MCF 10A (cell line): ENCODE measurements at regions of chr2 and their contacts with region 1.

Region 1: GRCh38 chr2:191677646-191678436 is at the start of gene NABP1:
- DNase-seq: peak; percentile 97
- H3K4me3 Mint-ChIP-seq: peak within 1 kb of the TSS; percentile 84
- H3K27ac Mint-ChIP-seq: peak within 1 kb of the TSS; percentile 92
- H3K4me1 Mint-ChIP-seq: peaks cover 22% of the 10 kb centered on the region
- H3K27me3 Mint-ChIP-seq: no peaks in the 10 kb centered on the region
- CTCF ChIP-seq: no peak
- total RNA-seq, gene NABP1: 81.8 and 96.3 TPM in 2 replicates

Region 2: DNA sequence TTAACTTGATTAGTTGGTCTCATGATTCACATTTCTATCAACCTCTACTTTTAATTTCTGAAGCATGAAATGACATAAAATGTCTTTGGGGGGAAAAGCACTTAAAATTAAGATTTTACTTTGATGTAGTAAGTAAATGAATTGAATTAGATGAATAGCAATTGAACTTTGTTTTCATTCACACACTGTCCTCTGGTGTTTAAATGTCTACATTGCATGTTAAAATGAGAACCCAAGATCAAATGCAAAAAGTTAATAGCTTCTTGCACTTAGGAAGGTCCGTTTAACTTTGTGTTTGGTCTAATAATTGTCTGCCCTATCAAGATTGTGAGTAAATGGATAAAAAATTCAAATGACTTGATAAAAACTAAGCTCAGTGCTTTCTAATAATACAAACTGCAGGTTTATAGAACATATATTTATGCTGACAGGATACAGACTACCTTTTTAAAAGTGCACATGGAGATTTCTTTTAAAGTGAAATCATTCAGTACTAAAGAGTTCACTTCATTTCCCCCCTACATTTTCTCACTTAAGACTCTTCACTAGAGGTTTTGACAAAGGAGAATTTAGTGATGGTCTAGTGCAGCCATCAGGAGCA is 156.1 kb before region 1 on chr2:
- CTCF ChIA-PET with region 1: no interaction called
- POLR2A ChIA-PET with region 1: no interaction called
- intact Hi-C with region 1: no loop called
- DNase-seq: peak; percentile 57
- H3K4me3 Mint-ChIP-seq: no peak overlapping the region
- H3K27ac Mint-ChIP-seq: no peak overlapping the region
- H3K4me1 Mint-ChIP-seq: no peaks in the 10 kb centered on the region
- H3K27me3 Mint-ChIP-seq: no peaks in the 10 kb centered on the region
- CTCF ChIP-seq: peak; percentile 51

Region 3: GRCh38 chr2:191566344-191566743 is 111.5 kb before region 1 on chr2:
- CTCF ChIA-PET with region 1: interaction called, 14 read pairs
- POLR2A ChIA-PET with region 1: interaction called, 17 read pairs
- intact Hi-C with region 1: no loop called
- DNase-seq: peak; percentile 80
- H3K4me3 Mint-ChIP-seq: no peak overlapping the region
- H3K27ac Mint-ChIP-seq: no peak overlapping the region
- H3K4me1 Mint-ChIP-seq: no peaks in the 10 kb centered on the region
- H3K27me3 Mint-ChIP-seq: no peaks in the 10 kb centered on the region
- CTCF ChIP-seq: peak; percentile 76

Region 4: GRCh38 chr2:191593622-191594416 is 84.0 kb before region 1 on chr2:
- CTCF ChIA-PET with region 1: no interaction called
- POLR2A ChIA-PET with region 1: interaction called, 10 read pairs
- intact Hi-C with region 1: loop called (anchors 1 kb)
- DNase-seq: peak; percentile 99
- H3K4me3 Mint-ChIP-seq: peak overlapping the region; percentile 14
- H3K27ac Mint-ChIP-seq: peak overlapping the region; percentile 92
- H3K4me1 Mint-ChIP-seq: peaks cover 6% of the 10 kb centered on the region
- H3K27me3 Mint-ChIP-seq: no peaks in the 10 kb centered on the region
- CTCF ChIP-seq: no peak

Region 5: GRCh38 chr2:191626497-191627151 is 51.2 kb before region 1 on chr2:
- CTCF ChIA-PET with region 1: no interaction called
- POLR2A ChIA-PET with region 1: interaction called, 39 read pairs
- intact Hi-C with region 1: no loop called
- DNase-seq: peak; percentile 64
- H3K4me3 Mint-ChIP-seq: no peak overlapping the region
- H3K27ac Mint-ChIP-seq: no peak overlapping the region
- H3K4me1 Mint-ChIP-seq: peaks cover 53% of the 10 kb centered on the region
- H3K27me3 Mint-ChIP-seq: no peaks in the 10 kb centered on the region
- CTCF ChIP-seq: no peak

Region 6: GRCh38 chr2:191646195-191646902 is 31.5 kb before region 1 on chr2:
- CTCF ChIA-PET with region 1: interaction called, 3 read pairs
- POLR2A ChIA-PET with region 1: interaction called, 48 read pairs
- intact Hi-C with region 1: no loop called
- DNase-seq: peak; percentile 74
- H3K4me3 Mint-ChIP-seq: no peak overlapping the region
- H3K27ac Mint-ChIP-seq: peak overlapping the region; percentile 83
- H3K4me1 Mint-ChIP-seq: peaks cover 26% of the 10 kb centered on the region
- H3K27me3 Mint-ChIP-seq: no peaks in the 10 kb centered on the region
- CTCF ChIP-seq: no peak

Region 7: DNA sequence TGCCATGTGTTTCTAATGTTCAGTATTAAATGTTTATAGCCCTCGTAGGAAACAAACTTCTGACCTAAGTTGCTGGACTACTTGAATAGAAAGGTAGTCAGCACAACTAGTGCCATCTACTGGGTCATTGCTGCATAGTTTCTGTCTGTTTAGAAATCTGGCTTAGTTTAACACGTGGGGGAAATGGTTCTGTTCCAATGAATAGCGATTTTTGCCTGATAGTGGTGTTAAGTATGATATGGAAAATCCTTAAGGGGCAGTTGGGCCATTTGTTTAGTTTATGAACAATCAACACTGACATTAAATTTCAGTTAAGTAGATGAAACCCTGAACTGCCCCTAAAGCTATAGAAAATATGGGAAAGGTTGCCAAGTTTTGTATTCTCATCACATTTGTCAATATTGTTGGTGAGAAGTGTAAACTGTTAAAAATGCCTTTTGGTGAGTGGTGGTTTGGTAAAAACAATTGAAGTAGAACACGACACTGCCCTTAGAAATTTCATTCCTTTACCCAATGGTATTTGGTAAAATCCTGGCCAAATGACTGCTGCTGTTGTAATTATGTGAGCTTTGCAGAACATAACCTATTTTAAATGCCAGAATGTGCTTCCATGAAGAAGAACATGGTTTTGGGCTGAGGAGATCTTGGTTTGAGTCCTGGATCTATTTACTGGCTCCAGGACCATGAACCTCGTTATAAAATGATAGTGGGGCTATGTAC is 13.3 kb after region 1 on chr2:
- CTCF ChIA-PET with region 1: interaction called, 6 read pairs
- POLR2A ChIA-PET with region 1: interaction called, 28 read pairs
- intact Hi-C with region 1: loop called (anchors 1 kb)
- DNase-seq: peak; percentile 77
- H3K4me3 Mint-ChIP-seq: peak overlapping the region; percentile 32
- H3K27ac Mint-ChIP-seq: peak overlapping the region; percentile 72
- H3K4me1 Mint-ChIP-seq: peaks cover 34% of the 10 kb centered on the region
- H3K27me3 Mint-ChIP-seq: no peaks in the 10 kb centered on the region
- CTCF ChIP-seq: peak; percentile 66